Dorsolateral prefrontal cortex (tissue), 120 donors: ENCODE measurements at regions of chr4 and their contacts with region 1.

Region 1: DNA sequence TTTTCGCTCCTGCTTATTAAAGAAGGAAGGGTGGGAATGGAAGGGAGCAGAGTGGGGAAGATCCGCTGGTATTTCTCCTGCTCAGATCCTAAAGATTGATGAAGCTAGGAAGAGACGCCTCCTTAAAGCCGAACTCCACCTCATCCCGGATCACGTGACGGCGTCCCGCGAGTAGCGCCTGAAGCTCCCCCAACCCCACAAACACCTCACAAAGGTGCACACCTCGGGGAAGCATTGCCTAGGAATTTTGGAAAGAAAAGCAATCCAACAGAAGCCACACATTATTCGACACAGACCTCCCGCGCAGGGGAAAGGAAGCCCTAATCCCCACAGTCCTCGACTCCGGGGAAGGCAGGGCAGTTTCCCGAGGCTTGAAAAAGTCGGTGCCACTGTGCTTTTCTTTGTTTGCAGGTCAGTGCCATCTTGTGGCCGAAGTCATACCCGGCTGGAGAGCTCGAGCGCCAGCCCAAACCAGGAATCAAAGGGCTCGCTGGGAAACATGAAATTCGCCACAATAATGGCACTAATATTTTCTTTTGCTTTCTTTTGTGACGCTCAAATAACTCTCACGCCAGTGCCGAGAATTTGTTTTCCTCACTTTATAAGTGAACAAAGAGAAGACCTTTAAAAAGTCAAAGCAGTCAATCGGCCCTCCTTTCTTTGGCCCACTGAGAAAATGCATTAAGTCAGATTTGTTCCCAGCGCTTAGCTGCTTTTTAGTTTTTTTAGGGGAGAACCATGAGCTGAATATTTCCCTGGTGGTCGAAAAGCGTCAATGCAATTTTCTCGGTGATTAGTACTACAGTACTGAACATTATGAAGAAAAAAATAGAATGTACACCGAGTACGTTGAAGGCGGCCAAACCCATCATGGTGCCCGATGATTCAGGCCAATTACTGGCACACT is at the start of gene NPY1R:
- DNase-seq: peak; percentile 45 to 84 (median 78)
- H3K4me3 ChIP-seq: peak within 1 kb of the TSS; percentile 49 to 90 (median 73)
- H3K27ac ChIP-seq: peak within 1 kb of the TSS in 53 of 59 donors; percentile 5 to 86 (median 62)
- H3K27me3 ChIP-seq: no peaks in the 10 kb centered on the region
- CTCF ChIP-seq: peak in 55 of 56 donors; percentile 47 to 88 (median 75)
- total RNA-seq, gene NPY1R: 10.9 to 64.4 (median 32.6) TPM

Region 2: DNA sequence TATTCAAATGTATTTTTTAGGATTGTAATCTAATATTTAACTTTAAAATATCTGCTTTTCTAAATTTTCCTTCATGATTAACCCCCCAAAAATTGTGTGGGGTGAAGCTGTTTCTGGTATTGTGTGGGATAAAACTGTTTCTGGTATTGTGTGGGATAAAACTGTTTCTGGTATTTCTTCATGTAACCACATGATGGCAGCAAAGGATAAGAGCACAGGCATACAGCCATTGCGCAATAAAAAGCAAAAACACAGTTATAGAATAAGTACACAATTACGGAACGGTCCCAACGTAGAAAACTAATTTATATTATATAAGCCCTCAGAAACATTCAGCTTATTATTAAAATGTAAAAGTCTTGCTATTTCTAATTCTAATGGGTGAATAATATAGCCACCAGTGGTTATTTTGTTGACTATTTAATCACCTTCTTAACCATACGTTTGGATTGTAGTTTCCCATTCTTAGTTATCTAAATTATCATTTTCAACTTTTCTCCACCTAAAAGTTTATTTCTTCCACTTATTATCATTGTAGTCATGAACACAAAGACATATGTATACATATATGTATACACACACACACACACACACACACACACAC is 835.1 kb before region 1 on chr4:
- intact Hi-C with region 1: loop called (anchors 2 to 5 kb)
- DNase-seq: no peak
- H3K4me3 ChIP-seq: peak overlapping the region in 38 of 59 donors; percentile 1 to 52 (median 34)
- H3K27ac ChIP-seq: no peak overlapping the region
- H3K27me3 ChIP-seq: no peaks in the 10 kb centered on the region
- CTCF ChIP-seq: peak; percentile 75 to 94 (median 86)

Region 3: DNA sequence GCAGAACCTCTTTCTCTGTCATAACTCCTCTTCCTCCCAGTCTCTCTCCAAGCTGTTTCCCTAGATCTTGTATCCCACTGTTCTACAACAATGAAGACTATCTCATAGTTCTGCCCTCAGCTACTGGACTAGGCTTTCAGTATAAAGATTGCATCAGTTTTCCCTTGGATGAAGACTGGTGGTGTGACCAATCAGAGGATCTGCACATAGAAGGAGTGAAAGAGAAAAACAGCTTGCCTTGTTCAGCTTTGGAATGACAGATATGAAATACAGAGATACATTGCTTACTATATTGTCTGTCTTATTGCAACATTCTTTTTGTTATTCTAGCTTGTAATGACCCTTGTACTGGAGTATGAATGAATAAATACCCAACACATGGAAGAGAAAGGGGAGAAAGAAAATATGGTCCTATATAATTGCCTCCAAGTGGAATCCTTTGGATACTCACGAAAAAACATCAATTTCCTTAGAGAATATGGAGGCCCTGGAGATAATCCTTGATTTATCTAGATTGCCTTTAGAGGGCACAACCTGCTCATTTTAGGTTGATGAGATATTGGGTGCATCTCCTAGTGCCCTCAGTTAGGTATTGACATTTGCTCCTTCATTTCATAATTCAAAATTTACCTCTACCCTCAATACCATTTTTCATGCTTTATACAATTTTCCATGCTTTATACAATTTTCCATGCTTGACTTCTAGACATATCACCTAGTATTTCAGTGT is 561.8 kb before region 1 on chr4:
- intact Hi-C with region 1: loop called in 1 of 2 experiments (anchors 10 kb)
- DNase-seq: no peak
- H3K4me3 ChIP-seq: no peak overlapping the region
- H3K27ac ChIP-seq: no peak overlapping the region
- H3K27me3 ChIP-seq: no peaks in the 10 kb centered on the region
- CTCF ChIP-seq: peak in 39 of 56 donors; percentile 11 to 61 (median 31)

Region 4: DNA sequence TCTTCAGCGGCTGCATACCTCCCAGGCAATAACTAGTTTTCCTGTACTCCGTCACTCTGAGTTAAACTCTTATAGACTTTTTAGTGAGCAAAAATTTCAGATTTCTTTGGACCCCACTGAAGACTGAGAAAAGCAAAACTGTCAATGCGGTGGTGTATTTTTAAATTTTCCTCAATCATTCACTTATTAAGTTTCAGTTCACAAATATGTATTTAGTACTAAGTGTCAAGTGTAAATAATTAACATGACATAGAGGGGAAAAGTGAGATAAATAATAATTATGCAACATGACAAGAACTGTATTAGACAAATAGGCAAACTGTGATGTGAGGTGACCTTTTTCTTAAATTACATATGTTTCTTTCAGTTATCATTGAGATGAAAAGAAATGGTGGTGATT is 290.4 kb before region 1 on chr4:
- intact Hi-C with region 1: loop called in 1 of 2 experiments (anchors 10 kb)
- DNase-seq: no peak
- H3K4me3 ChIP-seq: no peak overlapping the region
- H3K27ac ChIP-seq: no peak overlapping the region
- H3K27me3 ChIP-seq: no peaks in the 10 kb centered on the region
- CTCF ChIP-seq: no peak

Region 5: GRCh38 chr4:163166041-163166579 is 166.6 kb before region 1 on chr4:
- intact Hi-C with region 1: loop called (anchors 5 to 10 kb)
- DNase-seq: peak in 8 of 10 donors; percentile 25 to 63 (median 35)
- H3K4me3 ChIP-seq: peak overlapping the region; percentile 58 to 97 (median 89)
- H3K27ac ChIP-seq: peak overlapping the region; percentile 0 to 94 (median 77)
- H3K27me3 ChIP-seq: no peaks in the 10 kb centered on the region
- CTCF ChIP-seq: no peak